ENCODE measurements at regions of chr11 and their contacts with region 1.

Region 1: GRCh38 chr11:126431401-126432064 is 76.0 kb downstream of the ST3GAL4 start:
- DNase-seq: no peak
- ATAC-seq: peak; percentile 64

Region 2: DNA sequence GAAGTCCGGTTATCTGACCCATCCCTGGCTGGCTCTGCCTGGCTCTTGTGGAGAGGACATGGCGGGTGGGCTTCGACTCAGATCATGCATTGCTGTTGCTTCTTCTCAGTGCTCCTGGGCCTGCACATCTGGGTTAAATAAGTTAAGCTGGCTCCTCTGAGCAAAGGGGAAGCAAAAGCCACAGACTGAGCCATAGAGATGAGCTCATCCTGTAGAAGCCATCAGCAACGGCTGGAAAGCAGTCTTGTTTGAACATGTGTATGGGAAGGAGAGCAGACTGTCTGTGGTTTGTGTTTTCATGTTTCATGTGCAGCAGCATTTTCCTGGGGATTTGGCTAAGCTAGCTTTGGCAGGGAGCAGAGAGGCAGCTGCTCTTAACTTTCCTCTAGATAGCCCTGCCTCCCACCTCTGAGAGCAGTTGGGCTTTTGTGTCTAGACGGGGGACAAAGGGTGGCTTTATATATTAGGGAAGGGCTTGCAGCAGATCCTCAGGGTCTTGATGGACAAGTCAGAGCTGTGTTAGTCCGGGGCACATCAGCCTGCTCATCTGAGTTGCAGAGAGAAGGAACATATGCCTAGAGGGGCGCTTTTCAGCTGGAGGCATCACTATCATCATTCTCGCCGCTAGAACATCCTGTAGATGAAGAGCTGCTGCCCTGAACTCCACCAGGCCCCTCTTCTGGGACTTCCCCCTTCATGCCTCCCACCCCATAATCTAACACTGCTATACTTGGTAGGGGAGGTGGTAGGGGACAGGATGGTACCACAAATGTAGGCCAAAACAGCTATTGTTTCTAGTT is 112.8 kb before region 1 on chr11:
- intact Hi-C with region 1: loop called (anchors 5 kb)
- DNase-seq: no peak
- ATAC-seq: peak; percentile 93

Region 3: GRCh38 chr11:126480410-126481302 is 49.1 kb after region 1 on chr11:
- intact Hi-C with region 1: loop called (anchors 5 kb)
- DNase-seq: peak; percentile 90
- ATAC-seq: peak; percentile 93

Region 4: GRCh38 chr11:126660761-126661425 is 229.4 kb after region 1 on chr11:
- intact Hi-C with region 1: no loop called
- DNase-seq: no peak
- ATAC-seq: no peak

Region 5: DNA sequence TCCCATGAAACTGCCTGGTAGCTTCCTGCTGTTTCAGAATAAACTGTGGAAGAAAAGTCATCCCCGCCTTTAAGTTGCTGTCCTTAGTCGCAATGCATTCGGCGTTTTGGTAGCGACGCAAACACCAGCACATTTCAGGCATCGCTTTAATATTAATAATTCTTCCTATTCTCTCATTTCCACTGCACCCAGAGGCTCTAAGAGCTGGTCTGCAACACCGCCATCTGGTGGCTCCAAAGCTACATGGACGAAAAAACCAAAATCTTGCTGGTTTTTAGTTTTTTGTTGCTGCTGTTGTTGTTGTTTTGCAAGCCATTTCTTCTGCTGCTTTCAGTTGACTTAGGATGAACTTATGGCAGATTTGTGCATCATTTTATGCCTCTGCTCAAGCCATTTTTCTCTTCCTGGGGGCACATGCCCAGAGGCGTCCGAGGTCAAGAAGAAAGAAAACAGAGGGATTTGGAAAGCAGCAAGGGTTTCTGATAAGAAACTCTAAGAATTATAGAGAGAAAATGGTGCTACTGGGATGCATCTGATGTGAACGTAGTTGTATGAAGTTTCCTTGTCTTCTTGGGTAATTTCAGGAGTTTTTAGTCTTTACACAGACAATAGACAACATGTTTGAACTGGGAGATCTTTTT is 914.4 kb after region 1 on chr11:
- intact Hi-C with region 1: loop called (anchors 10 kb)
- DNase-seq: peak; percentile 61
- ATAC-seq: no peak